ENCODE measurements at regions of chr7 and their contacts with region 1.

Region 1: GRCh38 chr7:81482600-81483186 is 287.2 kb downstream of the HGF start:
- DNase-seq: no peak
- H3K4me3 ChIP-seq: no peak overlapping the region
- H3K27ac ChIP-seq: peak overlapping the region in 1 of 2 donors; percentile 10
- H3K4me1 ChIP-seq: no peaks in the 10 kb centered on the region
- H3K27me3 ChIP-seq: no peaks in the 10 kb centered on the region
- CTCF ChIP-seq: peak; percentile 11 to 64 (median 64)

Region 2: DNA sequence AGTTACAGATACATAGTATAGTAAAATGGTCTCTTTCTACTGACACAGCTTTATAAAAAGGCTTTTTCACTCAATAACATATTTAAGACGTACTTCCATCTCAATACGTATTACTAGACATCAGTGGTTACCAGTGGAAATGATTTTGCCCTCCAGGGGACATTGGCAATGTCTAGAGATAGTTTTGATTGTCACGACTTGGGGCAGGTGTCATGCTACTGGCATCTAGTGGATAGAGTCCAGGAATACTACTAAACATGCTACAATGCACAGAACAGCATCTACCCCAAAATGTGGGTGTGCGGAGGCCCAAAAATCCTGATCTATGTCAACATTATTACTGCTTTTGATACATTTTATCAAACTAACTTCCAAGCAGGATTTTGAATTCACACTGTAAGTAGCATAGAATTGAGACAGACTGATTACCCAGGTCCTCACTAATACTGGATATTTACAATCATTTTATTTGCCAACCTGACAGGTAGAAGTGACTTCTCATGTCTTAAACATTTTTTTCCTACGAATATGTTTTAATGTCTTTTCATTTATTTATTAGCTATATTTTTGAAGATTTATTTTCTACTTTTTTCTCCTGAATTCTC is 233.4 kb after region 1 on chr7:
- intact Hi-C with region 1: loop called (anchors 5 kb)
- DNase-seq: no peak
- H3K4me3 ChIP-seq: no peak overlapping the region
- H3K27ac ChIP-seq: no peak overlapping the region
- H3K4me1 ChIP-seq: no peaks in the 10 kb centered on the region
- H3K27me3 ChIP-seq: no peaks in the 10 kb centered on the region
- CTCF ChIP-seq: peak in 2 of 3 experiments; percentile 32 to 50

Region 3: GRCh38 chr7:82017334-82017943 is 534.7 kb after region 1 on chr7:
- intact Hi-C with region 1: loop called (anchors 5 kb)
- DNase-seq: no peak
- H3K4me3 ChIP-seq: no peak overlapping the region
- H3K27ac ChIP-seq: no peak overlapping the region
- H3K4me1 ChIP-seq: peaks cover 0 to 9% of the 10 kb centered on the region in 2 donors
- H3K27me3 ChIP-seq: no peaks in the 10 kb centered on the region
- CTCF ChIP-seq: peak; percentile 11 to 43 (median 29)

Measured in ascending aorta (tissue), 2 donors.